Left ventricle myocardium inferior (tissue), 1 donor: ENCODE measurements at regions of chr2 and their contacts with region 1.

Region 1: DNA sequence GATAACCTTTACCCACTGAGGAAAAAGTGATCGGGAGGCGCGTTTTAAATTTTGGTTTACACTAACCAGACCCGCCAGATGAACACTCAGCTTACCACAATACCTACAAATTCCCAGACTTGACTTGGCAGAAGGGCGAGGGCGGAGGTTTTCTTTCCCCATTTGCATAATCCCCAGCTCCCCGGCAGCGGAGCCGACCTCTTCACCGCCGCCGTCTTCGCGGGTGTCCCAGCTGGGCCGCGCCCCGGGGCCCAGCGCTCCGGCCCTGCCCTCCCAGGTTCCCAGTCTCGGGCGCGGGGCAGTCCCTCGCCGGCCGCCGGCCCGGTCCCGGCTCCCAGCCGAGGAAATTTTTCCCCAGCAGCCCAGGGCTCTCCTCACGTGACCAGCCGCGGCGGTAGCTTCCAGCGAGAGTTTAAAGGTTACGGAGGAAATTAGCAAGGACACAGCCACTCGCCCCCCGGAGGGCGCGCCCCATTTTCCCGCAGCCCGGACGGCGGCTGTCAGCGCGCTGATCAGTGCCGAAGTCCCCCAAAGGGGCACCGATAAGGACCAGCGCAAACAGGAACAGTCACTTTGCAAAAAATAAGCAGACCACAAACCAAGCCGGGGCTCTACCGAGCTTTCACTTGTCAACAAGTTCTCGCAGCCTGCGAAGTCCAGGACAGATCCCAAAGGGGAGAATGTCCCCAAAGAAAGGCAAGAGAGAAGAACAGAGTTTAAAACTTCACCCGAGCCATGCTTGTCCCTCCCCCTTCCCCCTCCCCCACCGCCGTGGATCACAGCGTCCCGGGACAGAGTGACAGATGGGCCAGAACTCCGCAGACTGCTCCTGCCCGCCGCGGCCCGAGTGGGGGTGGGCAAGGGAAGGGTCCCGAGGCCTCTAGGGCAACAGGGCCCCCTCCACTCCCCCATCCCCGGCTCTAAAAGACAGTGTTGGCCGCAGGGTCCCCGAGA is 1.3 kb upstream of the PRKCE start:
- DNase-seq: peak; percentile 86
- H3K4me3 ChIP-seq: peak overlapping the region; percentile 87
- H3K27ac ChIP-seq: peak overlapping the region; percentile 99
- H3K4me1 ChIP-seq: peaks cover 70% of the 10 kb centered on the region
- H3K27me3 ChIP-seq: no peaks in the 10 kb centered on the region
- CTCF ChIP-seq: no peak

Region 2: GRCh38 chr2:45771261-45771660 is 121.1 kb after region 1 on chr2:
- intact Hi-C with region 1: loop called (anchors 5 kb)
- DNase-seq: peak; percentile 70
- H3K4me3 ChIP-seq: peak overlapping the region; percentile 53
- H3K27ac ChIP-seq: peak overlapping the region; percentile 85
- H3K4me1 ChIP-seq: peaks cover 88% of the 10 kb centered on the region
- H3K27me3 ChIP-seq: no peaks in the 10 kb centered on the region
- CTCF ChIP-seq: no peak